ENCODE measurements at regions of chr6 and their contacts with region 1.

Region 1: GRCh38 chr6:116971959-116972358 is 94.9 kb downstream of the RFX6 start:
- DNase-seq: no peak
- H3K4me3 ChIP-seq: no peak overlapping the region
- H3K27ac ChIP-seq: no peak overlapping the region
- H3K27me3 ChIP-seq: no peaks in the 10 kb centered on the region
- CTCF ChIP-seq: peak; percentile 67

Region 2: GRCh38 chr6:116948533-116949304 is 23.2 kb before region 1 on chr6:
- CTCF ChIA-PET with region 1: interaction called, 11 read pairs
- POLR2A ChIA-PET with region 1: no interaction called
- DNase-seq: no peak
- H3K4me3 ChIP-seq: no peak overlapping the region
- H3K27ac ChIP-seq: no peak overlapping the region
- H3K27me3 ChIP-seq: no peaks in the 10 kb centered on the region
- CTCF ChIP-seq: no peak

Region 3: GRCh38 chr6:117072134-117072533 is 100.2 kb after region 1 on chr6:
- CTCF ChIA-PET with region 1: no interaction called
- POLR2A ChIA-PET with region 1: no interaction called
- DNase-seq: no peak
- H3K4me3 ChIP-seq: no peak overlapping the region
- H3K27ac ChIP-seq: no peak overlapping the region
- H3K27me3 ChIP-seq: no peaks in the 10 kb centered on the region
- CTCF ChIP-seq: no peak